Ascending aorta (tissue), 2 donors: ENCODE measurements at regions of chr4 and their contacts with region 1.

Region 1: GRCh38 chr4:55948726-55949474 is at the start of gene CEP135:
- DNase-seq: peak; percentile 72 to 95
- H3K4me3 ChIP-seq: peak within 1 kb of the TSS; percentile 61 to 98
- H3K27ac ChIP-seq: peak within 1 kb of the TSS; percentile 90 to 93
- H3K4me1 ChIP-seq: peaks cover 0 to 15% of the 10 kb centered on the region in 2 donors
- H3K27me3 ChIP-seq: no peaks in the 10 kb centered on the region
- CTCF ChIP-seq: peak; percentile 88 to 94 (median 93)
- total RNA-seq, gene CEP135: 0.53 TPM

Region 2: GRCh38 chr4:55345980-55346850 is 602.7 kb before region 1 on chr4 and contains the start of gene SRD5A3:
- intact Hi-C with region 1: loop called (anchors 5 kb)
- DNase-seq: peak; percentile 48 to 91
- H3K4me3 ChIP-seq: peak within 1 kb of the TSS; percentile 73 to 90
- H3K27ac ChIP-seq: peak within 1 kb of the TSS; percentile 95 to 98
- H3K4me1 ChIP-seq: peaks cover 4 to 6% of the 10 kb centered on the region in 2 donors
- H3K27me3 ChIP-seq: no peaks in the 10 kb centered on the region
- CTCF ChIP-seq: peak; percentile 79 to 91 (median 88)
- total RNA-seq, gene SRD5A3: 6.8 TPM

Region 3: DNA sequence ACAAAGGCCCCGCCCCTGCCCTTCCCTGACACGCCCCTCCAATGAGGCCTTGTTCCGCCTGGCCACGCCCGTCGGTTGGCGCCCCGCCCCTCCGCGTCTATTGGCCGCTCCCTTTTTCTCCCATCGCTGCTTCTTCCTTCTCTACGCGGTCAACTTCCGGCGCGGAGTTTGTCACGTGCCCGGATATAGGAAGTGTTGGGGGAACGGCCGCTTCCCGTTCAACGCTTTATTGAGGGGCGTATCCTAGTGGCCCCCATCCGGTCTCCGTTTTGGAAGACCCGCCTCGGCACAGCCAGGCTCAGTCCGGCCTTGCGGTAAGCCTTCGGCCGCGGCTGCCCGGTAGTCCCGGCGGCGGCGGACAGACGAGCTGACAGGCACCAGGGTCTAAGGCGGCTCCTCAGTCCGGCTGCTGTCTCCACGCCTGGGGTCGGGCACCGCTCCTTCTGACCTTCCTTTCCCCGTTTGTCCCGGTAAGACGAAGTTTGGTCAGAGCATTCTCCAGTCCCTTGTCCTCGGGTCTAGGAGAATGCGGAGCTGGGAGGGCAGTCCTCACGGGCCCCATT is 95.3 kb before region 1 on chr4 and contains the start of gene EXOC1:
- intact Hi-C with region 1: loop called (anchors 1 kb)
- DNase-seq: peak; percentile 95 to 99
- H3K4me3 ChIP-seq: peak within 1 kb of the TSS; percentile 90 to 93
- H3K27ac ChIP-seq: peak within 1 kb of the TSS; percentile 87 to 96
- H3K4me1 ChIP-seq: peaks cover 0 to 7% of the 10 kb centered on the region in 2 donors
- H3K27me3 ChIP-seq: no peaks in the 10 kb centered on the region
- CTCF ChIP-seq: no peak
- total RNA-seq, gene EXOC1: 13.6 TPM

Region 4: GRCh38 chr4:56301181-56302076 is 352.5 kb after region 1 on chr4:
- intact Hi-C with region 1: loop called (anchors 2 kb)
- DNase-seq: peak in 1 of 2 donors; percentile 78
- H3K4me3 ChIP-seq: peak overlapping the region in 1 of 2 donors; percentile 32
- H3K27ac ChIP-seq: no peak overlapping the region
- H3K4me1 ChIP-seq: no peaks in the 10 kb centered on the region
- H3K27me3 ChIP-seq: no peaks in the 10 kb centered on the region
- CTCF ChIP-seq: peak; percentile 44 to 78 (median 66)

Region 5: GRCh38 chr4:56435306-56435926 is 486.5 kb after region 1 on chr4 and contains the start of gene PPAT:
- intact Hi-C with region 1: loop called (anchors 1 kb)
- DNase-seq: peak; percentile 92 to 98
- H3K4me3 ChIP-seq: peak within 1 kb of the TSS; percentile 70 to 86
- H3K27ac ChIP-seq: peak within 1 kb of the TSS; percentile 84 to 88
- H3K4me1 ChIP-seq: peaks cover 0 to 7% of the 10 kb centered on the region in 2 donors
- H3K27me3 ChIP-seq: no peaks in the 10 kb centered on the region
- CTCF ChIP-seq: peak in 1 of 3 experiments; percentile 35
- total RNA-seq, gene PPAT: 3.6 TPM

Region 6: DNA sequence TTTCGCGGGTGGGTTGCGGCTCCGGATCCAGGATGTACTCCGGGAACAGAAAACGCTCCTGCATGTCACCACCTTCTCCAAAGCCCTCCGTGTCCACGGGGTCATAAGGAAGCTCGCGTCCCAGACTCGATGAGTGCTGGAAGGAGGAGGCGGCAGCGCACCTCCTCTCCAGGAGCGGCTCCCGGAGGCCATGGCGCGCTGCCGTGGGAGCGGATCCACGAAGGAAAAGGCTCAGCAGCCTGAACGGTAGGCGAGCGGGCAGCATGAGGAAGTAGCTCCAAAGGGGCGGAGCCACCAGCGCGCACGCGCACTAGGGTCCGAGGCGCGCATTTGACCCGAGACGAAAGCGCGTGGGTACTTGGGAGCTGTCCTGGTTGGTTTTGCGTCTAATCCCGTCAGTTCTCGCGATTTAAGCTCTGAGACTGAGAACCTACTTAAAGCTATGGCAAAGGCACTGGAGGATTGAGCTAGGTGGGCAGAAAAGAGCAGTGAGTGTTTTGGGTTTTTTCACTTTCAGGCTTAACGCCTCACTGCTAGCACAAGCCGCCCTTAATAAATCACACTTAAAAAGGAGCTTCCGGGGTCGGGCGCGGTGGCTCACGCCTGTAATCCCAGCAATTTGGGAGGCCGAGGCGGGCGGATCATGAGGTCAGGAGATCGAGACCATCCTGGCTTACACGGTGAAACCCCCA is 1028.6 kb after region 1 on chr4 and contains the start of gene NOA1:
- intact Hi-C with region 1: loop called (anchors 5 kb)
- DNase-seq: peak; percentile 98 to 100
- H3K4me3 ChIP-seq: peak within 1 kb of the TSS; percentile 84 to 91
- H3K27ac ChIP-seq: peak within 1 kb of the TSS; percentile 90 to 94
- H3K4me1 ChIP-seq: peaks cover 5 to 19% of the 10 kb centered on the region in 2 donors
- H3K27me3 ChIP-seq: no peaks in the 10 kb centered on the region
- CTCF ChIP-seq: no peak
- total RNA-seq, gene NOA1: 36.6 TPM